Activated naive CD4-positive, alpha-beta T cell treated with anti-CD3 and anti-CD28 coated beads for 36 hours (primary cell): ENCODE measurements at regions of chr20 and their contacts with region 1.

Region 1: DNA sequence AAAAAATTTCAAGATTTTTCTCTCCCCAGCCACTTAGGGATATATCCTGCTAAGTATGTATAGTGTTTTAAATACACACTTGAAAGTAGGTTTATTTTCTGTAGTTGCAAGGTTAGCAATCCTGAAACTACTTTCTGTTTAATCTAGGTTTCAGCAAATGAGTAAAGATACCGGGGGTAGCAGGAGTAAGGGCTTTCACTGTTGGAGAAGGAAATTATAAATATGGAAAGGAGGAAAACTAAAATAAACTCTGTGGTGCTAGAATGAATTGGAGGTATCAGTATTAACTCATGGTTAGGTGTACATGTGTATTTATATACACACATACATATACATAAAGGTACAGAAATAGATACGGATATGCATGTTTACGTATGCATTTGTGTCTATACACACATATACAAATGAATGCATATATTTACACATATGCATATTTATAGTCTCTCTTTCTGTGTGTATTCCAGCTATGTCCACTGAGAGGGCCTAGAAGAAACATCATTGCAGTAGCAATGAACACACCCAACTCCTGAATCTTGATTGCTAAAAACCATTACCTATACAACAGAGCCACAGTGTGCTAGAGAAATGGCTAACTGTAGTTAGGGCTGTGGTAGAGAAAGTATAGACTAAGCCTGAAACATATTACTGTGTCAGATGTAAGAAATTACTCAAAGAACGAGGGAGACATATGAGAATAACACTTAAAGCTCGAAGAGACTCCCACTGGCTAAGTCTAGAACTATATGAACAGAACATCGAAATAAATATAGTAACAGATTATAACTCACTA is 95.9 kb upstream of the EMILIN3 start:
- DNase-seq: no peak
- H3K4me3 Mint-ChIP-seq: no peak overlapping the region
- H3K27ac Mint-ChIP-seq: no peak overlapping the region
- H3K4me1 Mint-ChIP-seq: peaks cover 14% of the 10 kb centered on the region
- H3K27me3 Mint-ChIP-seq: no peaks in the 10 kb centered on the region

Region 2: DNA sequence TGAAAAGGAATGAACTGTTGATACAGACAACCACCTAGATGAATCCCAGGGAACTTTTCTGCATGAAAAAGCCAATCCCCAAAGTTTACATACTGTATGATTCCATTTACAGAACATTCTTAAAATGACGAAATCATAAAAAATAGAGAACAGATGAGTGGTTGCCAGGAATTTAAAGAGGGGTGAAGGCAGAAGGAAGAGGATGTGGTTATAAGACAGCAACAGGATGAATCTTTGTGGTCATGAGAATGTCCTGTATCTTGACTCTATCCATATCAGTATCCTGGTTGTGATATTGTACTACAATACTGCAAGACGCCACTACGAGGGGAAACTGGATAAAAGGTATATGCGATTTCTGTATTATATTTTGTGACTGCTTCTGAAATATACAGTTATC is 25.9 kb before region 1 on chr20:
- CTCF ChIA-PET with region 1: no interaction called
- intact Hi-C with region 1: loop called (anchors 1 kb)
- DNase-seq: no peak
- H3K4me3 Mint-ChIP-seq: no peak overlapping the region
- H3K27ac Mint-ChIP-seq: no peak overlapping the region
- H3K4me1 Mint-ChIP-seq: peaks cover 48% of the 10 kb centered on the region
- H3K27me3 Mint-ChIP-seq: no peaks in the 10 kb centered on the region